ENCODE measurements at regions of chr1 and their contacts with region 1.

Region 1: GRCh38 chr1:44002606-44003157 is 11.3 kb downstream of the CCDC24 start:
- DNase-seq: peak; percentile 40
- ATAC-seq: peak; percentile 62
- H3K4me3 Mint-ChIP-seq: no peak overlapping the region
- H3K27ac Mint-ChIP-seq: no peak overlapping the region
- H3K4me1 Mint-ChIP-seq: peaks cover under 1% of the 10 kb centered on the region; the same call in 1 of the 2 replicates
- H3K27me3 Mint-ChIP-seq: no peaks in the 10 kb centered on the region; the same call in 1 of the 2 replicates
- CTCF ChIP-seq: peak; percentile 62; the same call in 1 of the 2 replicates

Region 2: GRCh38 chr1:43858328-43858731 is 144.4 kb before region 1 on chr1:
- CTCF ChIA-PET with region 1: no interaction called
- POLR2A ChIA-PET with region 1: no interaction called
- DNase-seq: peak; percentile 49
- ATAC-seq: peak; percentile 97
- H3K4me3 Mint-ChIP-seq: no peak overlapping the region
- H3K27ac Mint-ChIP-seq: no peak overlapping the region; the same call in 1 of the 2 replicates
- H3K4me1 Mint-ChIP-seq: peaks cover 16% of the 10 kb centered on the region
- H3K27me3 Mint-ChIP-seq: no peaks in the 10 kb centered on the region; the same call in 1 of the 2 replicates
- CTCF ChIP-seq: no peak

Region 3: DNA sequence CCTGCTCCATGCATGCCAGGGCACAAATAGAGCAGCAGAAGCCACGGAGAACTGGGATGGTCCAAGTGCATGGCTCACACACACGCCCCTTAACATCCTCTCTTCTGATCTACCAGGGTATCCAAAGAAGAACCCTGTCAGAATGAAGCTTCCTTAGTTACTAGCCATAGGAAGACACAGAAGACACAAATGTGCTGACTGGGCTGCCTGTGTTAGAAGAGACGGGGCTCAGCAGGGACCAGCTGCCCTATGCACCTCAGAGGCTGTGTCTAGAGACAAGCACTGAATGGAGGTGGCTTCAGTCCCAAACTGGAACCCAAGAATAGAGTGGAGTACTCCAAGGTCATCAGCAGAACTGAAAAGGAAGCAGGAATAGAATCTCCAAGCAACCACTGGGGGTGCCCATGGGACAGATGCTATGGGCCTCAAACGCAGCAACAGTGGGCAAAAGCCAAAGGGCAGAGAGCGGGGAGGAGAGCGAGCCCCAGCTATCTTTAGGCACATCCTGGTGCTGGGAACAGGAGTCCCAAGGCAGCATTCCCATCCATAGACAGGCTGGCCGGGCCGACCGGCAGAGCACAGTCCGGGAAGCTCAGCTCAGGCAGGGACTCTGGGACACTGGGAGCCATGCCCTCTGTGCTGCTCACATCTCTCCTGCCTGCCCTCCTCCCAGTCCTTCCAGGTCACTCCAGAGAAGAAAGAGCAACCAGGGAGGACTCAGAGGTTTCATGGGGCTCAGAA is 19.1 kb after region 1 on chr1:
- CTCF ChIA-PET with region 1: interaction called, 11 read pairs
- POLR2A ChIA-PET with region 1: no interaction called
- DNase-seq: no peak
- ATAC-seq: no peak; the same call in 1 of the 2 replicates
- H3K4me3 Mint-ChIP-seq: no peak overlapping the region
- H3K27ac Mint-ChIP-seq: no peak overlapping the region
- H3K4me1 Mint-ChIP-seq: peaks cover 10% of the 10 kb centered on the region
- H3K27me3 Mint-ChIP-seq: no peaks in the 10 kb centered on the region
- CTCF ChIP-seq: no peak

Region 4: GRCh38 chr1:44030605-44031251 is 28.0 kb after region 1 on chr1:
- CTCF ChIA-PET with region 1: interaction called, 132 read pairs
- POLR2A ChIA-PET with region 1: interaction called, 4 read pairs
- DNase-seq: peak; percentile 73
- ATAC-seq: peak; percentile 30
- H3K4me3 Mint-ChIP-seq: peak overlapping the region; percentile 87
- H3K27ac Mint-ChIP-seq: no peak overlapping the region
- H3K4me1 Mint-ChIP-seq: peaks cover 42% of the 10 kb centered on the region
- H3K27me3 Mint-ChIP-seq: no peaks in the 10 kb centered on the region
- CTCF ChIP-seq: no peak

Measured in WTC11 (cell line).